Prostate gland (tissue), 2 donors: ENCODE measurements at regions of chr16 and their contacts with region 1.

Region 1: DNA sequence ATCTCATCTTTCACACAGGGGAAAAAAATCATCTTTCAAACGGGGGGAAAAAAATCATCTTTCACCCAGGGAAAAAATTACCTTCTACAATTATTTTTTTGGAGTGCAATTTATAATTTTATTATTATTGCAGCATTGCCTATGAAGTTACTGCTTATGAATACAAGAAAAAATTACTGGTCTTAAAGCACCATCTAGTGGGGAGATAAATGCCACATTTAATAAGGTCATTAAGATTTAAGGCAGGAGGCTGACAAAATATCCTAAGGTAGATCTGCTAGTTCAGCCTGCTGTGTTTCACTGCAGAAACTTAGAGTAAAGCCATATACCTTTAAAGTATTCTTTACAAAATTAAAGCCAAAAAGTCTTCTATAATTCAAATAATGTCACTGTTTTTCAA is 13.7 kb downstream of the SHCBP1 start:
- DNase-seq: no peak
- H3K4me3 ChIP-seq: no peak overlapping the region
- H3K27ac ChIP-seq: no peak overlapping the region
- H3K4me1 ChIP-seq: no peaks in the 10 kb centered on the region
- H3K27me3 ChIP-seq: no peaks in the 10 kb centered on the region
- CTCF ChIP-seq: peak in 3 of 4 experiments; percentile 34 to 49 (median 46)
- POLR2A ChIP-seq: no peak

Region 2: DNA sequence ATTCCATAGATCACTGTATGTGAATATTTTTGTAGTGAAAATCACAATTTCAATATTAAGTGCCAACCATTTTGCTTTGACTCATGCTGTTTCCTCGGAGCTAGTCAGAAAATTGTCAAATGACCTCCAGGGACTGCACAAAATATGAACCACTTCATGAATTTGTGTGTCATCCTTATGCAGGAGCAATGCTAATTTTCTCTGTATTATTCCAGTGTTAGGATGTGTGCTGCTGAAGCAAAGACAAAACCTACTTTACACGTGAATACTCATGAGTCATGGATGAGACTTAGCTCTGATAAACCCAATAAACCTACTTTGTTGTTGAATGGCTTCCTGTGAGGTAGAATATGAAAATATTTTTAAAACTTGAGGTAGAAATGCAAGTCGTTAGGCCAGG is 51.6 kb before region 1 on chr16:
- intact Hi-C with region 1: loop called (anchors 5 kb)
- DNase-seq: no peak
- H3K4me3 ChIP-seq: no peak overlapping the region
- H3K27ac ChIP-seq: no peak overlapping the region
- H3K4me1 ChIP-seq: no peaks in the 10 kb centered on the region
- H3K27me3 ChIP-seq: no peaks in the 10 kb centered on the region
- CTCF ChIP-seq: no peak
- POLR2A ChIP-seq: no peak

Region 3: GRCh38 chr16:46830902-46831647 is 223.5 kb after region 1 on chr16 and contains the start of gene C16orf87:
- intact Hi-C with region 1: no loop called
- DNase-seq: peak; percentile 88
- H3K4me3 ChIP-seq: peak within 1 kb of the TSS; percentile 94 to 98
- H3K27ac ChIP-seq: peak within 1 kb of the TSS; percentile 86 to 87
- H3K4me1 ChIP-seq: peaks cover 8% of the 10 kb centered on the region
- H3K27me3 ChIP-seq: no peaks in the 10 kb centered on the region
- CTCF ChIP-seq: peak in 2 of 4 experiments; percentile 10
- POLR2A ChIP-seq: peak; percentile 50
- total RNA-seq, gene C16orf87: 8.1 to 24.4 TPM